ENCODE measurements at regions of chr12 and their contacts with region 1.

Region 1: DNA sequence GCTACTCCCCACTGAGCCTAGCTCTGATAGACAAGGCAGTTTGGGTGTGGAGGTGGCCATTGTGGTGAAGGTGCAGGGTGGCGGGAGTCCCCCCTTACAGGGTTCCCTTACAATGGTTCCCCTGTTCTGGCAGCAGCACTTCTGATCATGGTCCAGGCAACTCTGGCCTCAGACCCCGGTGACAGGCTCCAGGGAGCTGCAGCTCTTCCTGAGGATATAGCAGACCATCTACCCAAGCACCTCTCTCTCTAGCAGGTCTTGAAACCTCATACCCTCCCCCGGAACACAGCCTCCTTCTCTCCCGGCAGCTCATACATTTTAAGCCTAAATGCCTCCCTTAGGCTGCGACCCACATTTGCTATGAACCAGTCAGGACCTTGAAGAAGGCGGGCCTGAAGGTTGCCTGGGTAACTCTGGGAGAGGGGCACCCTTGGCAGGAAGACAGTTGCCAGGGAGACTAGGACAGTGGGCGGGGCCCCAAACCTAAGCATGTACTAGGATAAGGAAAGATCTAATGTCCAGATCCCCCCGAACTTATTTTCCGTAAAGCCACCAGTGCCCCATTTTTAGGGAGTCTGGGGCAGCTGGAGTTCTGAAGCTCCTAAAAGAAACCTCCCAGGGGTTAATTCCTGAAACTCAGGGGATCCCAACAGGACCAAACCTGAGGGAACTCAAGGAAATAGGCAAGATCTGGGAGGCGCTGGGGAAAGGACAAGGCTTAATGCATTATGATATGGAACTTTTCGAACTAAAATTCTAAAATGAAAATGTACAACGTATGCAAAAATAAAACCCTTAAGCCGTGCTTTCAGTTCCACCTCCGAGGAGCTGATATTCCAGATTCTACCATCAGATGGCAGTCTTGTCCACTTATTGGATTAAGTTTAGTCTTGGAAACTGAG is 4.5 kb upstream of the GDF11 start:
- DNase-seq: peak; percentile 90
- H3K4me3 Mint-ChIP-seq: peak overlapping the region; percentile 87
- H3K27ac Mint-ChIP-seq: peak overlapping the region; percentile 86
- H3K4me1 Mint-ChIP-seq: peaks cover 43% of the 10 kb centered on the region
- H3K27me3 Mint-ChIP-seq: peaks cover 11% of the 10 kb centered on the region

Region 2: DNA sequence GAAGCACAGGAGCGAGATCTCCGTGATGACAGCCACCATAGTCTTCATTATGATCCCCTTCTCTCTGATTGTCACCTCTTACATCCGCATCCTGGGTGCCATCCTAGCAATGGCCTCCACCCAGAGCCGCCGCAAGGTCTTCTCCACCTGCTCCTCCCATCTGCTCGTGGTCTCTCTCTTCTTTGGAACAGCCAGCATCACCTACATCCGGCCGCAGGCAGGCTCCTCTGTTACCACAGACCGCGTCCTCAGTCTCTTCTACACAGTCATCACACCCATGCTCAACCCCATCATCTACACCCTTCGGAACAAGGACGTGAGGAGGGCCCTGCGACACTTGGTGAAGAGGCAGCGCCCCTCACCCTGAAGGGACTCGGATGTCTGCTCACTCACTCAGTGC is 100.9 kb before region 1 on chr12:
- CTCF ChIA-PET with region 1: no interaction called
- POLR2A ChIA-PET with region 1: no interaction called
- DNase-seq: peak; percentile 51
- H3K4me3 Mint-ChIP-seq: peak overlapping the region; percentile 39
- H3K27ac Mint-ChIP-seq: peak overlapping the region; percentile 84
- H3K4me1 Mint-ChIP-seq: peaks cover 15% of the 10 kb centered on the region
- H3K27me3 Mint-ChIP-seq: peaks cover 3% of the 10 kb centered on the region

Region 3: DNA sequence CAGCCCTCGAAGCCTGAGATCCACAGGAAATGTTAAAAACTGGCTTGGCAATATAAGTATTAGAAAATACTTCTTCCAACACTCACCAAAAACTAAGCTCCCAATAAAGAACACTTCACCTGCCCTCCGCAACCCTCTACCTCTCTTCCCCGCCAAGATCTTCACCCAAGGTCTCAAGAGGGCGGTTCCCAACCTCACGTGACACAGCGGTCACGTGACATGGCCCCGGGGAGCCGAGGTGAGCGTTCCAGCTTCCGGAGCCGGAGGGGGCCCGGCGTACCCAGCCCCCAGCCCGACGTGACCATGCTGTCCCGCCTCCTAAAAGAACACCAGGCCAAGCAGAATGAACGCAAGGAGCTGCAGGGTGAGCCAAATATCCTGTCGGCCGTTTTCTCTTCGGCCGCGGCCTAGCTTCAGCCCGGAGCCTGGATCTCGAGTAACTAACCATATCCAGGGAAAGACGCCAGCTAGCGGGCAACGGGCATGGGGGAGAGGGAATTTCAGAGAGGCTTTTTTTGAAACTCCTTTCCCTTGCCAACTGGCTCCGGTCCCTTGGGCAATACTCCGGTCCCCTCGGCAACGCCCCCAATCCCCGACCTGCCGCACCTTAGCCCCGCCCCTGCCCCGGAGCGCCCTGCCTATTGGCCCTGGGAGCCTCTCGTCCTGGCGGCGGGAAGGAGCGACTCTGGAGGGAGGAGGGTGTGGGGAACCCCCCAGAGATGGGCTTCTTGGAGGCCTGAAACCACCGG is 22.4 kb before region 1 on chr12 and contains the start of gene BLOC1S1:
- CTCF ChIA-PET with region 1: interaction called, 75 read pairs
- POLR2A ChIA-PET with region 1: no interaction called
- DNase-seq: peak; percentile 95
- H3K4me3 Mint-ChIP-seq: peak within 1 kb of the TSS; percentile 91
- H3K27ac Mint-ChIP-seq: peak within 1 kb of the TSS; percentile 95
- H3K4me1 Mint-ChIP-seq: peaks cover 46% of the 10 kb centered on the region
- H3K27me3 Mint-ChIP-seq: peaks cover 17% of the 10 kb centered on the region
- total RNA-seq, gene BLOC1S1: 164 to 181 TPM

Region 4: GRCh38 chr12:55797068-55797467 is 58.7 kb after region 1 on chr12:
- CTCF ChIA-PET with region 1: interaction called, 12 read pairs
- POLR2A ChIA-PET with region 1: no interaction called
- DNase-seq: peak; percentile 32
- H3K4me3 Mint-ChIP-seq: no peak overlapping the region
- H3K27ac Mint-ChIP-seq: no peak overlapping the region
- H3K4me1 Mint-ChIP-seq: peaks cover 10% of the 10 kb centered on the region
- H3K27me3 Mint-ChIP-seq: no peaks in the 10 kb centered on the region

Region 5: DNA sequence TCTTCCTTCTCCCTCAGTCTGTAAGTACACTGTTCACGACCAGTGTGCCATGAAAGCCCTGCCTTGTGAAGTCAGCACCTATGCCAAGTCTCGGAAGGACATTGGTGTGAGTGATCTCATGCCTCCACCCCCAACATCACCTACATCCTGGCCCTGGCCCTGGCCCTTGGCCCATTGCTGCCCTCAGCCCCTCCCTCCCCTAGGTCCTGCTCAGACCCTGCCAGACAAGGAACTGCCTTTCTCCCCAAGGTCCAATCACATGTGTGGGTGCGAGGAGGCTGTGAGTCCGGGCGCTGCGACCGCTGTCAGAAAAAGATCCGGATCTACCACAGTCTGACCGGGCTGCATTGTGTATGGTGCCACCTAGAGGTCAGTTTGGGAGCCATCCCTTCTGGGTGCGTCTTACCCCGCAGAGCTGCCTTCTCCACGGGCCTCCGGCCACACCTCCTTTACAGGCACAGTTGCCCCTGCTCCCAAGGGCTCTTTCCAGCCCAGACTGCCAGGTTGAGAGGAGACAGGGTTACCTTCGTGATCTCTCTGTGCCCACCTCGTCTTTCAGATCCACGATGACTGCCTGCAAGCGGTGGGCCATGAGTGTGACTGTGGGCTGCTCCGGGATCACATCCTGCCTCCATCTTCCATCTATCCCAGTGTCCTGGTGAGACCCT is 201.8 kb after region 1 on chr12:
- CTCF ChIA-PET with region 1: interaction called, 19 read pairs
- POLR2A ChIA-PET with region 1: no interaction called
- DNase-seq: peak; percentile 90
- H3K4me3 Mint-ChIP-seq: peak overlapping the region; percentile 36
- H3K27ac Mint-ChIP-seq: peak overlapping the region; percentile 73
- H3K4me1 Mint-ChIP-seq: peaks cover 80% of the 10 kb centered on the region
- H3K27me3 Mint-ChIP-seq: no peaks in the 10 kb centered on the region

Region 6: GRCh38 chr12:56041552-56042429 is 303.4 kb after region 1 on chr12 and contains the start of gene RPS26:
- CTCF ChIA-PET with region 1: interaction called, 16 read pairs
- POLR2A ChIA-PET with region 1: no interaction called
- DNase-seq: peak; percentile 97
- H3K4me3 Mint-ChIP-seq: peak within 1 kb of the TSS; percentile 100
- H3K27ac Mint-ChIP-seq: peak within 1 kb of the TSS; percentile 99
- H3K4me1 Mint-ChIP-seq: peaks cover 57% of the 10 kb centered on the region
- H3K27me3 Mint-ChIP-seq: no peaks in the 10 kb centered on the region
- total RNA-seq, gene RPS26: 47.2 to 48.3 TPM

Measured in activated CD4-positive, alpha-beta T cell treated with anti-CD3 and anti-CD28 coated beads, Interleukin-2, amount 10 ng/mL, durations not matched to agents 7 days and 5 days (primary cell).